ENCODE measurements at regions of chr7 and their contacts with region 1.

Region 1: DNA sequence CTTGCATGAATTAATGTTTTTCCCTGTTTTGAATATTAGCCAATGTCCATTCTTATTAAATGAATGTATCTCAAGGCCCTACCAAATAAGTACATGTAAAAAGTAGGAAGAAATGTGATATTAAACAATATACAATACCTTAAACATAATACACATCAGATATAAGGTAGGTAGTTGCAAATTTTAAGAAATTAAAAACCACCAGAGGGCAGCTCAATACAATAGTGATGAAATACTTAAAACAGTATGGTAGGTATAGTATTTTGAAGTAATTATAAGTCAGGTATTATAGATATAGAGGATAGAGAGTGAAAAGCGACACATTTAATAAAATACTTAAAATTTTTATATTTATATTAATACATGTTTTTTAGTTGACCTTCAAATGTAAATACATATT is 43.6 kb upstream of the CDK14 start:
- DNase-seq: no peak
- ATAC-seq: peak in 1 of 2 donors; percentile 39
- H3K4me3 ChIP-seq: no peak overlapping the region
- H3K27ac ChIP-seq: no peak overlapping the region
- H3K4me1 ChIP-seq: no peaks in the 10 kb centered on the region
- H3K27me3 ChIP-seq: no peaks in the 10 kb centered on the region
- CTCF ChIP-seq: peak in 2 of 5 experiments; percentile 40
- POLR2A ChIP-seq: no peak

Region 2: GRCh38 chr7:90530263-90530662 is 22.3 kb before region 1 on chr7:
- in situ Hi-C with region 1: no loop called
- intact Hi-C with region 1: no loop called
- DNase-seq: no peak
- ATAC-seq: no peak
- H3K4me3 ChIP-seq: no peak overlapping the region
- H3K27ac ChIP-seq: no peak overlapping the region
- H3K4me1 ChIP-seq: no peaks in the 10 kb centered on the region
- H3K27me3 ChIP-seq: no peaks in the 10 kb centered on the region
- CTCF ChIP-seq: no peak
- POLR2A ChIP-seq: no peak

Region 3: GRCh38 chr7:90595801-90596671 is 43.5 kb after region 1 on chr7 and contains the start of gene CDK14:
- in situ Hi-C with region 1: no loop called
- intact Hi-C with region 1: loop called (anchors 2 kb)
- DNase-seq: peak; percentile 68 to 69
- ATAC-seq: peak; percentile 75 to 83
- H3K4me3 ChIP-seq: peak within 1 kb of the TSS; percentile 72 to 92 (median 78)
- H3K27ac ChIP-seq: peak within 1 kb of the TSS; percentile 66 to 86 (median 76)
- H3K4me1 ChIP-seq: peaks cover 10 to 40% of the 10 kb centered on the region in 2 donors
- H3K27me3 ChIP-seq: no peaks in the 10 kb centered on the region
- CTCF ChIP-seq: peak; percentile 31 to 66 (median 63)
- POLR2A ChIP-seq: peak; percentile 31 to 32
- total RNA-seq, gene CDK14: 3.9 to 8.6 (median 7.3) TPM

Region 4: GRCh38 chr7:90613088-90613498 is 60.6 kb after region 1 on chr7:
- in situ Hi-C with region 1: no loop called
- intact Hi-C with region 1: no loop called
- DNase-seq: no peak
- ATAC-seq: no peak
- H3K4me3 ChIP-seq: no peak overlapping the region
- H3K27ac ChIP-seq: no peak overlapping the region
- H3K4me1 ChIP-seq: peaks cover 3 to 9% of the 10 kb centered on the region in 2 donors
- H3K27me3 ChIP-seq: no peaks in the 10 kb centered on the region
- CTCF ChIP-seq: no peak
- POLR2A ChIP-seq: no peak

Region 5: GRCh38 chr7:90629297-90629918 is 76.9 kb after region 1 on chr7:
- in situ Hi-C with region 1: loop called in 1 of 4 experiments (anchors 10 kb)
- intact Hi-C with region 1: loop called (anchors 5 kb)
- DNase-seq: no peak
- ATAC-seq: peak; percentile 81 to 90
- H3K4me3 ChIP-seq: no peak overlapping the region
- H3K27ac ChIP-seq: no peak overlapping the region
- H3K4me1 ChIP-seq: peaks cover 2 to 6% of the 10 kb centered on the region in 2 donors
- H3K27me3 ChIP-seq: no peaks in the 10 kb centered on the region
- CTCF ChIP-seq: peak; percentile 34 to 63 (median 46)
- POLR2A ChIP-seq: no peak

Region 6: GRCh38 chr7:90877201-90877600 is 324.7 kb after region 1 on chr7:
- in situ Hi-C with region 1: no loop called
- intact Hi-C with region 1: no loop called
- DNase-seq: no peak
- ATAC-seq: no peak
- H3K4me3 ChIP-seq: no peak overlapping the region
- H3K27ac ChIP-seq: no peak overlapping the region
- H3K4me1 ChIP-seq: no peaks in the 10 kb centered on the region
- H3K27me3 ChIP-seq: no peaks in the 10 kb centered on the region
- CTCF ChIP-seq: no peak
- POLR2A ChIP-seq: no peak

Region 7: DNA sequence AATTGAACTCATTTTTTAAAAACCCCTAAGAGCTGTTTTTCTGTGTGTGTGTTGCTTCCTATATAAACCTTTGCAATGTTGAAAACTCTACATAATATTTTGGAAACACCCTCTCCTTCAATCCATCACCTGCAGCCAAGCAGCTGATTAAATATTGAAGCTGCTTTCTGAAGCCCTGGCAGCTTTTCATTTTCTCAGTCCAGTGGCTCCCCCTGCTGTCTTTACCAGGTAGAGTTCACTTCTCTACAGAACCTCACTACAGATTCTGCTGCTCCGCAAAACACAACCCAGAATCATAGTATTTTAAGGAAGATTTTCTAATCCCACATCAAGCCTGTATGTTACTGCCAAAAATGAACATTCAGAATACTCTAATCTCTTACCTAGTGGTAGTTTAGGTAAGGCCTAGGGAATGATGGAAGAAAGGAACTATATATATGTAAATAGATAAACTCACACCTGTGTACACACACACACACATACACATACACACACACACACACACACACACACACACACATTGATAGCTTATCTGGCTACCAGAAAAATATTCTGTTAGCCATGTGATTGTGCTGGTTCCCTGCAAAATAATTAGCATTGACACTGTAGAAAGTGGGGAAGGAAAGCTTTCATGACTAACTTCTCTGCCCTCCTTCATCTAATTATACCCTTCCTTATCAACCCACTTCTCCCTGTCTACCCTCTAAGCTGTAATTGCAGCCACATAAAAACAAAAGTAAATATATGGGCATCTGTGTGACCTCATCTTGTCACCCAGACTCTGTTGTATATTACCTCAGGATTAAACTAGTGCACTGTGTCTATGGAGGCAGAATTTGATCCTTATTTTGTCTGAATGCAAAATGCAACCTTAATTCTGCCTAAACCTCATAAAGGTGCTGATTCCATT is 482.2 kb after region 1 on chr7:
- in situ Hi-C with region 1: loop called in 2 of 4 experiments (anchors 10 to 25 kb)
- intact Hi-C with region 1: loop called (anchors 5 kb)
- DNase-seq: peak; percentile 13 to 34
- ATAC-seq: peak; percentile 60 to 70
- H3K4me3 ChIP-seq: no peak overlapping the region
- H3K27ac ChIP-seq: no peak overlapping the region
- H3K4me1 ChIP-seq: no peaks in the 10 kb centered on the region
- H3K27me3 ChIP-seq: no peaks in the 10 kb centered on the region
- CTCF ChIP-seq: peak; percentile 49 to 69 (median 58)
- POLR2A ChIP-seq: no peak

Measured in gastrocnemius medialis (tissue), 4 donors.